ENCODE measurements at regions of chr11 and their contacts with region 1.

Region 1: GRCh38 chr11:83249972-83250593 is 36.1 kb downstream of the CCDC90B start:
- DNase-seq: no peak
- H3K4me3 Mint-ChIP-seq: no peak overlapping the region
- H3K27ac Mint-ChIP-seq: no peak overlapping the region
- H3K4me1 Mint-ChIP-seq: peaks cover 4% of the 10 kb centered on the region
- H3K27me3 Mint-ChIP-seq: peaks cover 5% of the 10 kb centered on the region

Region 2: DNA sequence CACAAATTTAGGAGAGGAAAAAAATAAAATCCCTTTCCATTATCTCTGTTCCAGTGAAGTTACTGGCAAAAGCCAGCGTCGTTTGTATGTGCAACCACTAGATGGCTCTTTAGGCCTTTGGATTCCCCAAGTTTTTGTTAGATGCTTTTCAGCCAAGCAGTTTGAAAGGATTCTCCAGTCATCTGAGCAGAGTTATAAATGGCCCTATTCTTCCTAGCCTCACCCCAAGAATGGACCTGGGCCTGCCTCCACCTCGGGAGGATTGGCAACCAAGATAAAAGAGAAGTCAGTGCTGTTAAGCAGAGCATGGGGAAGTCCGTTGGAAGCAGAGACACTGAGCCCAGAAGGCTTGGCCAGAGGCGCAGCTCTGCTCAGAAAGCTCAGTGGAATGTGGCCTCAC is 531.8 kb before region 1 on chr11:
- intact Hi-C with region 1: loop called (anchors 5 kb)
- DNase-seq: no peak
- H3K4me3 Mint-ChIP-seq: no peak overlapping the region
- H3K27ac Mint-ChIP-seq: no peak overlapping the region
- H3K4me1 Mint-ChIP-seq: no peaks in the 10 kb centered on the region
- H3K27me3 Mint-ChIP-seq: peaks cover 5% of the 10 kb centered on the region

Region 3: GRCh38 chr11:82775736-82776346 is 474.2 kb before region 1 on chr11:
- intact Hi-C with region 1: loop called (anchors 1 kb)
- DNase-seq: peak; percentile 21
- H3K4me3 Mint-ChIP-seq: no peak overlapping the region
- H3K27ac Mint-ChIP-seq: no peak overlapping the region
- H3K4me1 Mint-ChIP-seq: peaks cover 4% of the 10 kb centered on the region
- H3K27me3 Mint-ChIP-seq: peaks cover 24% of the 10 kb centered on the region

Region 4: GRCh38 chr11:82906244-82906654 is 343.8 kb before region 1 on chr11:
- intact Hi-C with region 1: loop called (anchors 1 kb)
- DNase-seq: no peak
- H3K4me3 Mint-ChIP-seq: no peak overlapping the region
- H3K27ac Mint-ChIP-seq: no peak overlapping the region
- H3K4me1 Mint-ChIP-seq: peaks cover 56% of the 10 kb centered on the region
- H3K27me3 Mint-ChIP-seq: no peaks in the 10 kb centered on the region

Region 5: GRCh38 chr11:83087035-83087434 is 163.0 kb before region 1 on chr11:
- intact Hi-C with region 1: loop called (anchors 5 kb)
- DNase-seq: no peak
- H3K4me3 Mint-ChIP-seq: no peak overlapping the region
- H3K27ac Mint-ChIP-seq: no peak overlapping the region
- H3K4me1 Mint-ChIP-seq: no peaks in the 10 kb centered on the region
- H3K27me3 Mint-ChIP-seq: no peaks in the 10 kb centered on the region

Region 6: GRCh38 chr11:83222499-83222898 is 27.6 kb before region 1 on chr11:
- intact Hi-C with region 1: no loop called
- DNase-seq: no peak
- H3K4me3 Mint-ChIP-seq: no peak overlapping the region
- H3K27ac Mint-ChIP-seq: no peak overlapping the region
- H3K4me1 Mint-ChIP-seq: no peaks in the 10 kb centered on the region
- H3K27me3 Mint-ChIP-seq: peaks cover 9% of the 10 kb centered on the region

Region 7: DNA sequence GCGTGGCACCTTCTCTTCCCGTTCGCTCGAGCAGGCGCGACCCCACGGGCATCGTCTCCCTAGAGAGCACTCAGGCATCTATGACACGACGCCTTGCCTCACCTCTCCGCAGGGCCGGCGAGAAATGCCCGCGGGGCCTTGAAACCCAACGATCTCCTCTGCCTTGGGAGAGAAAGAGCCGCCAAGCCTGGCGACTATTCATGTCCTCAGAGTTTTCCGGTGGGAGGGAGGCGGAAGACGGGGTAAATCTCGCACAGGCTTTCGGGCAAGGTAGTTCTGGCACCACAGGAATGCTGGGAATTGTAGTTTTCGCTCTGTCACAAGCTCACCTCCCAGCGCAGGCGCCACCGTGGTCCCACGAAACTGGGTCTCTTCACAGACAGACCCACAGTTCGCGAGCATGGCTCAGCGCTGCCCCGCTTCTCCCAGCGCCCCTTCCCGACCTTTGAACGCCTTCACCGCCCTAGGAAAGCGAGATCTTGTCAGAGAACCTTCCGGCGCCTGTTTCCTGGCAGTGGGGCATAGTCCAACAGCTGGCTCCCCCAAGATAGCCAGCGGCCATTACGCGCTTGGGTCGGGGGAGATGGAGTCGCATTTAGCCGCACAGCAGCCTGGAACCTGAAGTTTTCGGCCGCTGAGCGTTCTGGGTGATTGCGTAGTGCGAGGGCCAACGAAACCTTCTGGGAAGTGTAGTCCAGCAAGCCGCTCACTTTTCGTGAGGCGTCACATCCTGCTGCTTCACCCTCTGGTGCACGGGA is 35.9 kb after region 1 on chr11 and contains the start of gene CCDC90B:
- intact Hi-C with region 1: loop called (anchors 2 kb)
- DNase-seq: peak; percentile 91
- H3K4me3 Mint-ChIP-seq: peak within 1 kb of the TSS; percentile 96
- H3K27ac Mint-ChIP-seq: peak within 1 kb of the TSS; percentile 95
- H3K4me1 Mint-ChIP-seq: peaks cover 21% of the 10 kb centered on the region
- H3K27me3 Mint-ChIP-seq: peaks cover 4% of the 10 kb centered on the region
- total RNA-seq, gene CCDC90B: 24.2 and 24.5 TPM in 2 replicates

Region 8: GRCh38 chr11:83389975-83390374 is 139.9 kb after region 1 on chr11:
- intact Hi-C with region 1: no loop called
- DNase-seq: no peak
- H3K4me3 Mint-ChIP-seq: no peak overlapping the region
- H3K27ac Mint-ChIP-seq: no peak overlapping the region
- H3K4me1 Mint-ChIP-seq: no peaks in the 10 kb centered on the region
- H3K27me3 Mint-ChIP-seq: no peaks in the 10 kb centered on the region